ENCODE measurements at regions of chr1 and their contacts with region 1.

Region 1: DNA sequence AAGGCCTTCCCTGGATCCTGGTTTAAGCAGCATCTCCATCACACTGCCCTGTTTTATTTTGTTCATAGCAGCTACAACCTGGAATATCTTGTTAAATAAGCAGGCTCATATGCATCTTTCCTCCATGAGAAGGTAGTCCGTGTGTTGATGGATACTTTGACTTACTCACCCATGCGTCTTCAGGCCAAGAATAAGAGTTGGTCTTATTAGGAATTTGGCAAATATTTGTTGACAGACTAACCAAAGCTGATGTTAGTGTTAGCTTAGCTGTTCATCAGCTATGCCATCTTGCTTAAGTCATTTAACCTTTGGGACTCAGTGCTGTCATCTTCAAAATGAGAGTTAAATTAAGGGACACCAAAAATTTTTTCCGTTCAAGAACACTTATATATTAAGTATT is 59.2 kb downstream of the SASS6 start:
- DNase-seq: no peak
- ATAC-seq: no peak
- H3K4me3 Mint-ChIP-seq: no peak overlapping the region
- H3K27ac Mint-ChIP-seq: no peak overlapping the region
- H3K4me1 Mint-ChIP-seq: peaks cover 4% of the 10 kb centered on the region
- H3K27me3 Mint-ChIP-seq: no peaks in the 10 kb centered on the region
- CTCF ChIP-seq: no peak

Region 2: GRCh38 chr1:98813738-98814309 is 1259.7 kb before region 1 on chr1:
- CTCF ChIA-PET with region 1: no interaction called
- POLR2A ChIA-PET with region 1: no interaction called
- intact Hi-C with region 1: no loop called
- DNase-seq: no peak
- ATAC-seq: no peak
- H3K4me3 Mint-ChIP-seq: no peak overlapping the region
- H3K27ac Mint-ChIP-seq: no peak overlapping the region
- H3K4me1 Mint-ChIP-seq: no peaks in the 10 kb centered on the region
- H3K27me3 Mint-ChIP-seq: peaks cover 2% of the 10 kb centered on the region
- CTCF ChIP-seq: no peak

Region 3: GRCh38 chr1:100051401-100051800 is 22.1 kb before region 1 on chr1:
- CTCF ChIA-PET with region 1: no interaction called
- POLR2A ChIA-PET with region 1: interaction called, 12 read pairs
- intact Hi-C with region 1: no loop called
- DNase-seq: no peak
- ATAC-seq: no peak
- H3K4me3 Mint-ChIP-seq: no peak overlapping the region
- H3K27ac Mint-ChIP-seq: no peak overlapping the region
- H3K4me1 Mint-ChIP-seq: peaks cover 55% of the 10 kb centered on the region
- H3K27me3 Mint-ChIP-seq: no peaks in the 10 kb centered on the region
- CTCF ChIP-seq: no peak

Region 4: GRCh38 chr1:100087396-100087795 is 13.9 kb after region 1 on chr1:
- CTCF ChIA-PET with region 1: no interaction called
- POLR2A ChIA-PET with region 1: interaction called, 8 read pairs
- intact Hi-C with region 1: loop called (anchors 2 kb)
- DNase-seq: no peak
- ATAC-seq: no peak
- H3K4me3 Mint-ChIP-seq: no peak overlapping the region
- H3K27ac Mint-ChIP-seq: no peak overlapping the region
- H3K4me1 Mint-ChIP-seq: no peaks in the 10 kb centered on the region
- H3K27me3 Mint-ChIP-seq: no peaks in the 10 kb centered on the region
- CTCF ChIP-seq: no peak

Region 5: DNA sequence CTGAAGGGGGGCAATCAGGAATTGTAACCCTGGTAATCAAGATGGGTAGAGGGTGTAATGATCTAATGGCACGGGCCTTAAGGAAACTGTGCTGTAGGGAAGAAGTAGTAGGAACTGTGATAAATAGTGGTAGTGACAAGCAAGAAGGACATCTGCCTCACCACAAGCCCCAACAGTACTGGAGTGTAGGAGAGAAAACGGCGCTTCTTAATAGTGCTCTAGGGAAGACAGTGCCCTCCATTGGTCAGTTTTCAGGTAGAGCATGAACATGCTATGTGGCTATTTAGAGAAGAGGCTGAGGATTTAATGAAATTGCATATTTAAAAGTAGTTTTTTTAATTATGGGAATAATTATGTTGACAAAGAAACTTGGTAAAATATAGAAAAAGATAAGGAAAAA is 854.6 kb after region 1 on chr1:
- CTCF ChIA-PET with region 1: no interaction called
- POLR2A ChIA-PET with region 1: no interaction called
- intact Hi-C with region 1: no loop called
- DNase-seq: no peak
- ATAC-seq: no peak
- H3K4me3 Mint-ChIP-seq: no peak overlapping the region
- H3K27ac Mint-ChIP-seq: no peak overlapping the region
- H3K4me1 Mint-ChIP-seq: peaks cover 20% of the 10 kb centered on the region
- H3K27me3 Mint-ChIP-seq: no peaks in the 10 kb centered on the region
- CTCF ChIP-seq: no peak

Region 6: DNA sequence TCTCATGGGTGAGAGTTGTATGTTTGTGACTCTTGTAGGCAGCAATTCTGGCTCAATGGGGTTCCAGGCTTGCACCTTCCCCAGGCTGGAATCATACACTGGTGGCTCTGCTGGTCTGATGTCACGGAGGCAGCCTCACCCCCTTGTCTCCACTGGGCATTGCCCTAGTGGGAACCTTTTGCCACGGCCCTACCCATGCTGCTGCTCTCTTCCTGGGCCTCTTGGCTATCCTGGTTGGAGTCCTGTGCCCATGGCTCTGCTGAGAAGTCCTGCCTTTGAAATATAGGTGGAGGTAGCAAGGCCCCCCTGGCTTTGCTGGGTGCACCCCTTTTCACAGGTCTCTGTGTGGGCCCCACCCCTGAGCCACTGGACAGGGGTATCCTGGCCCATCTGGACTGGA is 1022.0 kb after region 1 on chr1:
- CTCF ChIA-PET with region 1: no interaction called
- POLR2A ChIA-PET with region 1: no interaction called
- intact Hi-C with region 1: no loop called
- DNase-seq: no peak
- ATAC-seq: no peak
- H3K4me3 Mint-ChIP-seq: no peak overlapping the region
- H3K27ac Mint-ChIP-seq: no peak overlapping the region
- H3K4me1 Mint-ChIP-seq: peaks cover 4% of the 10 kb centered on the region
- H3K27me3 Mint-ChIP-seq: peaks cover 2% of the 10 kb centered on the region
- CTCF ChIP-seq: no peak